A673 (cell line): ENCODE measurements at regions of chr14 and their contacts with region 1.

Region 1: GRCh38 chr14:88667555-88668273 is 104.9 kb downstream of the ZC3H14 start:
- DNase-seq: peak; percentile 78
- H3K4me3 ChIP-seq: no peak overlapping the region
- H3K27ac ChIP-seq: no peak overlapping the region
- H3K4me1 ChIP-seq: no peaks in the 10 kb centered on the region
- H3K27me3 ChIP-seq: no peaks in the 10 kb centered on the region
- CTCF ChIP-seq: peak; percentile 82

Region 2: DNA sequence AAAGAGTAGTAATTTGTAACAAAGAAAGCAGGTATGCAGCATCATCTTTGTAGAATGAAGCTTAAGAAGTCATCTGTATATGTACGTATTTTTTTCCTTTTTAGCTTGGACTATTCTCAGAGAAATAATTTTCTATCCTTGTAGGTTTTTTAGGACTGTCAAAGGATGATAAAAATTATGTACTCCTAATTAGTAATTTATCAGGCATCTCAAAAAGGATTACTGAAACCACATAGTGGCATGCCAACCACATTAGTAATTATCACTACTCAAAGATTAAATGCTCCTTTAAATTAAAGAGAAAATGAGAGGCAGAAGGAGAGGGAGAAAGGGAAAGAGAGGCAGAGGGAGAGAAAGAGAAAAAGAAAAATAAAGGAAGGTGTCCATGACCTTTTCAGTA is 174.0 kb after region 1 on chr14:
- CTCF ChIA-PET with region 1: no interaction called
- POLR2A ChIA-PET with region 1: interaction called, 11 read pairs
- intact Hi-C with region 1: no loop called
- DNase-seq: no peak
- H3K4me3 ChIP-seq: no peak overlapping the region
- H3K27ac ChIP-seq: no peak overlapping the region
- H3K4me1 ChIP-seq: no peaks in the 10 kb centered on the region
- H3K27me3 ChIP-seq: no peaks in the 10 kb centered on the region
- CTCF ChIP-seq: no peak

Region 3: GRCh38 chr14:88870777-88871176 is 203.1 kb after region 1 on chr14:
- CTCF ChIA-PET with region 1: no interaction called
- POLR2A ChIA-PET with region 1: no interaction called
- intact Hi-C with region 1: loop called (anchors 5 kb)
- DNase-seq: peak; percentile 2
- H3K4me3 ChIP-seq: no peak overlapping the region
- H3K27ac ChIP-seq: no peak overlapping the region
- H3K4me1 ChIP-seq: no peaks in the 10 kb centered on the region
- H3K27me3 ChIP-seq: no peaks in the 10 kb centered on the region
- CTCF ChIP-seq: no peak

Region 4: GRCh38 chr14:89013084-89013504 is 345.4 kb after region 1 on chr14:
- CTCF ChIA-PET with region 1: no interaction called
- POLR2A ChIA-PET with region 1: no interaction called
- intact Hi-C with region 1: loop called (anchors 5 kb)
- DNase-seq: peak; percentile 58
- H3K4me3 ChIP-seq: no peak overlapping the region
- H3K27ac ChIP-seq: no peak overlapping the region
- H3K4me1 ChIP-seq: no peaks in the 10 kb centered on the region
- H3K27me3 ChIP-seq: no peaks in the 10 kb centered on the region
- CTCF ChIP-seq: peak; percentile 45